PC-9 (cell line): ENCODE measurements at regions of chr4 and their contacts with region 1.

Region 1: DNA sequence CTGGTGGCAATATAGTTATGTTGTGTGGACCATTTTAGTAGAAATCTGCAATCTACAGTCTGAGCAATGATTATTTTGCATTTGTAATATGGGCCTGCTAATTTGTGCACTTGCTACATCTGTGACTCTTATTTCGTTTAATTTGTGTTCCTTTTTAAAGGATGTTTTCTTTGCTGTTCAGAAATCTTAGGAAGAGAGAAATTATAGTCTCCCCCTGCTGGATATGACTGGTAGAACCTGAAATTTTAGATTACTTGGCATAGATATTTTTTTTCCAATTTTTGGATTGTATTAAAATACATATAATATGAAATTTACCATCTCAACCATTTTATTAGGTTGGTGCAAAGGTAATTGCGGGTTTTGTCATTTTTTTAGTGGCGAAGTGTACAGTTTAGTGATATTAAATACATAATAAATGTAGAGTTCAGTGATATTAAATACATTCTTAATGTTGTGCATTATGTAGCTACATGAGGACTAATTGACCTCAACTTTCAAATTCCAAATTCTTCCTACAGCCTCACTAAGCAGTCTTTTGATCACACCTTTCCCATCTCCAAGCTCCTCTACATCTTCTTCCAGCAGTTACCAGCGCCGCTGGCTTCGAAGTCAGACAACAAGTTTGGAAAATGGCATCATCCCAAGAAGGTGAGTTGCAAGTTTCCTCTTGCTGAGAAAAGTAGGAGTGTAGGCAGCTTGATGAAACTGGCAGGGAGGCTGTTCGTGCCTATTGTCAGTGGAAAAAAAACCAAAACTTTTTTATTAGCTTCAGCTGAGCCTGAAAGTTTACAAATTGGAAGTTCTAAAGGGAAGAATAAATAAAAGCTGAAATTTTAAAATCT is 82.2 kb downstream of the FNIP2 start:
- DNase-seq: no peak
- H3K4me3 ChIP-seq: no peak overlapping the region
- H3K27ac ChIP-seq: no peak overlapping the region
- H3K4me1 ChIP-seq: no peaks in the 10 kb centered on the region
- H3K27me3 ChIP-seq: no peaks in the 10 kb centered on the region
- CTCF ChIP-seq: peak; percentile 78

Region 2: DNA sequence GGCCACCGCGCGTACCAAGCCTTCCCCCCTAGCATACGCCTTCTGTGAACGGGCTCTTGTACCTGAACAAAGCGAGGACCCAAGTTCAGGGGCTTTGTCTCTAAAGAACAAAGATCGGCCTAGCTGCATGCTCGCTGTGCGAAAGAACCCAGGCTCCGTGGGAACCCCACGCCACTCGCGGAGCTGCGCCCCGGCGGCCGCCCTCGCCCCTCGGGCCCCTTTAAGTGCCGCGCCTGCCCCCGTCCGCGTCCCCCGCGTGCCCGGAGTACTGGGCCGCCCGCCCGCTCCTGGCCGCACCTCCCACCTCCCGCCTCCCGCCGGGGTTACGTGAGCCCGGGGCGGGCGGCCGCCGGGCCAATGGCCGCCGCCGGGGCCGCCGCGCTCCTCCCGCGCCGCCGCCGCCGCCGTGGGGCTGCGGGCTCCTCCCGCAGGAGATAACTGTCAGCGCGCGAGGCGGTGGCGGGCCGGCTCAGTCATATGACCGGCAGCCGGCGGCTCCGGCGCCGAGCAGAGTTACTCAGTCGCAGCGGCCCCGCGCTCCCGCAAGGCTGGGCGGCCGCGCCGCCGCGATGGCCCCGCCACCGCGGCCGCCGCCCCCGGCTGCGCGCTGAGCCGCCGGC is 82.4 kb before region 1 on chr4 and contains the start of gene FNIP2:
- CTCF ChIA-PET with region 1: no interaction called
- POLR2A ChIA-PET with region 1: no interaction called
- intact Hi-C with region 1: loop called (anchors 2 kb)
- DNase-seq: peak; percentile 34 to 75
- H3K4me3 ChIP-seq: peak within 1 kb of the TSS; percentile 86
- H3K27ac ChIP-seq: no peak within 1 kb of the TSS
- H3K4me1 ChIP-seq: no peaks in the 10 kb centered on the region
- H3K27me3 ChIP-seq: no peaks in the 10 kb centered on the region
- CTCF ChIP-seq: no peak
- total RNA-seq, gene FNIP2: 2.1 and 2.5 TPM in 2 replicates

Region 3: GRCh38 chr4:158873795-158874401 is 22.9 kb after region 1 on chr4:
- CTCF ChIA-PET with region 1: no interaction called
- POLR2A ChIA-PET with region 1: no interaction called
- intact Hi-C with region 1: no loop called
- DNase-seq: peak; percentile 61 to 98
- H3K4me3 ChIP-seq: peak overlapping the region; percentile 26; the same call in 1 of the 2 replicates
- H3K27ac ChIP-seq: peak overlapping the region; percentile 83
- H3K4me1 ChIP-seq: peaks cover 22% of the 10 kb centered on the region
- H3K27me3 ChIP-seq: no peaks in the 10 kb centered on the region
- CTCF ChIP-seq: no peak